IMR-90 (cell line): ENCODE measurements at regions of chr17 and their contacts with region 1.

Region 1: GRCh38 chr17:43924558-43924957 is 17.2 kb upstream of the MPP2 start:
- DNase-seq: no peak
- ATAC-seq: no peak
- H3K4me3 ChIP-seq: no peak overlapping the region
- H3K27ac ChIP-seq: no peak overlapping the region
- H3K4me1 ChIP-seq: no peaks in the 10 kb centered on the region
- H3K27me3 ChIP-seq: peaks cover 75% of the 10 kb centered on the region
- CTCF ChIP-seq: no peak
- POLR2A ChIP-seq: no peak
- RAD21 ChIP-seq: no peak

Region 2: DNA sequence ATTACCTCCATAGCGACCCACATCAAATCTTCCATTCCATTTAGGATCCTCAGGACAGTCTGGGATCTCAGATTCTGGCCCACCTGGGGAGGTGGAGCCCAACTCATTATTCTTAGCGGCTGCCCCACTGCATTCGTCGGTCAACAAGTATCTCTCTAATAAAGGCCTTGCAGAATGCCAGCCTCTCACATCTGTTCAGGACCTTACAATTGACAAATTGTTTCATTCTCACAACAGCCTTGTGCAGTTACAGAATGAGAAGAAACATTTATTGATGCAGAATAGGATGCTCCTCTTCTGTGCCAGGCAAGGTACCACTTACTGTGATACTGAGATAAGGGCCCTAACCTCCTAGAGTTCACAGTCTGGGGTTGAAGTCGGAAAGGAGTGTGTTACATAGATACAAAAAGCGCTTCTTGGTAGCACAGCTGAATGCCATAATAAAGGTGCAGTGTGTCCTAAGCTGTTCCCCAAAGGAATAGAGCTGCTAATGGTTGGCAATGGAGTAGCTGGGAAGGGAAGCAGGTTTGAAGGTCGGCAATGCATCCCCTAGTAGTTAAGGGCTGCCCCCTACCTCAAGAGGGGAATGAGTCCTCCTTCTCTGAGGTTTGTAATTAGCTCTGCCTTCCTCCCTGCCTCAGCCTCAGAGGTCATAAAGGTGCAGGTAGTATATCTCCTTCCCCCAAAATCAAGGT is 14.9 kb before region 1 on chr17:
- CTCF ChIA-PET with region 1: interaction called, 10 read pairs
- POLR2A ChIA-PET with region 1: interaction called, 3 read pairs
- dilution Hi-C with region 1: no loop called
- in situ Hi-C with region 1: no loop called
- intact Hi-C with region 1: no loop called
- DNase-seq: no peak
- ATAC-seq: no peak
- H3K4me3 ChIP-seq: no peak overlapping the region
- H3K27ac ChIP-seq: no peak overlapping the region
- H3K4me1 ChIP-seq: peaks cover 6% of the 10 kb centered on the region
- H3K27me3 ChIP-seq: peaks cover 34% of the 10 kb centered on the region
- CTCF ChIP-seq: no peak
- POLR2A ChIP-seq: no peak
- RAD21 ChIP-seq: no peak